Activated CD4-positive, alpha-beta T cell treated with anti-CD3 and anti-CD28 coated beads for 36 hours (primary cell): ENCODE measurements at regions of chr20 and their contacts with region 1.

Region 1: DNA sequence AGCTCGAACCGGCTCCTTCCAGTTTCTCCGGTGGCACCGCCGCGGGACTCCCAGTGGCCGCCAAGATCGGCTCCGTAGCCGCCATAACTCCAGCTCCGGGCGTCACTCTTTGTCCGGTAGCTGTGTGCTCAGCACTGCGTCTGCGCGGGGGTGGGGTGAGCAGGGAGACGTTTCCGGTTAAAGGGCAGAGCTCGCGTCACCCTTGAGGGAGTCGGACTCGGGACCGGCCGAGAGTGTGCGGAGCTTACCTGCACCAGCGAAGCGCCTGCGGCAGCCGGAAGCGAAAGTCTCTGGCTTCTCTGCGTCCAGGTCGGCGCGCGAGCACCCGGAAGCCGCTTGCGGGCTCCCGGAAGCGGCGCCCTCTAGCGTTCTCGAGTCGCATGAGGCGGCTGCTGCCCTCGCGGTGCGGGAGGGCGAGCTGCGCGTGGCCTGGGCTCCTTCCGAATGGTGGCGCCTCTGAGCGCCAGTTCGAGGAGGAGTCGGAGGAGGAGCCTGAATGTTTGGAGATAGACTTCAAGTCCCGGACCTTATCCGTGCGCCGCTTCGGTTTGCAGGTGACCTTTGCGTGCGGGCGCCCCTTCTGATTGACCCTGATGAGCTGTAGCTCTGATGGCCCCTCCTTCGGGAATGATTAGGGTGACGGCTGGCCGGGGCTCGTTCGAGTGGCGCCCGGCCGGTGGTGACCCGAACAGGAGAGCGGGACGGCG is at the start of gene SCAND1:
- DNase-seq: peak; percentile 99
- ATAC-seq: peak; percentile 91
- H3K4me3 Mint-ChIP-seq: peak within 1 kb of the TSS; percentile 97
- H3K27ac Mint-ChIP-seq: peak within 1 kb of the TSS; percentile 100
- H3K4me1 Mint-ChIP-seq: peaks cover 11% of the 10 kb centered on the region
- H3K27me3 Mint-ChIP-seq: no peaks in the 10 kb centered on the region
- total RNA-seq, gene SCAND1: 37.8 to 39.3 TPM

Region 2: GRCh38 chr20:34825530-34826362 is 1128.6 kb before region 1 on chr20 and contains the start of gene NCOA6:
- CTCF ChIA-PET with region 1: no interaction called
- POLR2A ChIA-PET with region 1: no interaction called
- intact Hi-C with region 1: loop called in 1 of 2 experiments (anchors 2 kb)
- DNase-seq: peak; percentile 95
- ATAC-seq: peak; percentile 67
- H3K4me3 Mint-ChIP-seq: peak within 1 kb of the TSS; percentile 86
- H3K27ac Mint-ChIP-seq: peak within 1 kb of the TSS; percentile 95
- H3K4me1 Mint-ChIP-seq: peaks cover 30% of the 10 kb centered on the region
- H3K27me3 Mint-ChIP-seq: no peaks in the 10 kb centered on the region
- total RNA-seq, gene NCOA6: 20.3 to 31.1 TPM

Region 3: DNA sequence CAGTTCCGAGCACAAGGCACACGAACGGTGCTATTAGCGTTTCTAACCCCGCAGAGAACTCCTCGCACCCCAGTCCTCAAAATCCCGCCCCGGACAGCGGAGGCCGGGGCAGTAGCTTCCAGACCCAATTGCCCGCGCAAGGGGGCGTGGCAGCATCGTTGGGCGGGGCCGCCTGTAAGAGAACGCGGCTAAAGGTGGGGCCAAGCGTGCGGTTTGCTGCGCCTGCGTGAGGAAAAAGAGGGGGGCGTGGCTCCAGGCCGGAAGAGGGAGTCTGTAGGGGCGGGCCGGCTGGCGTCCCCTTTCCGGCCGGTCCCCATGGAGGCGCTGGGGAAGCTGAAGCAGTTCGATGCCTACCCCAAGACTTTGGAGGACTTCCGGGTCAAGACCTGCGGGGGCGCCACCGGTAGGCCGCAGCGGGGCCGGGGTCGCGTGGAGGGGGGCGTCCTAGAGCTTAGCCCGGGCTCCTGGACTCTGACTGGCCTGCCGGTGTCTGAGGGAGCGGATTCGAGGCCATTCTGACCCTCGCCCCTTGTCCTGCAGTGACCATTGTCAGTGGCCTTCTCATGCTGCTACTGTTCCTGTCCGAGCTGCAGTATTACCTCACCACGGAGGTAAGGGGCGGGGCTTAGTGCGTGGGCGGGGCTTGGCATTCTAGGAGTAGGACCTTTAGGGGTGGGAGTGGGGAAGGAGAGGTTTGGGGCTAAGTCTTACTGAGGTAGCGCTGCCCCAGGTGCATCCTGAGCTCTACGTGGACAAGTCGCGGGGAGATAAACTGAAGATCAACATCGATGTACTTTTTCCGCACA is 412.4 kb before region 1 on chr20 and contains the start of gene ERGIC3:
- CTCF ChIA-PET with region 1: interaction called, 5 read pairs
- POLR2A ChIA-PET with region 1: interaction called, 5 read pairs
- intact Hi-C with region 1: loop called (anchors 1 to 5 kb)
- DNase-seq: peak; percentile 99
- ATAC-seq: peak; percentile 99
- H3K4me3 Mint-ChIP-seq: peak within 1 kb of the TSS; percentile 83
- H3K27ac Mint-ChIP-seq: peak within 1 kb of the TSS; percentile 83
- H3K4me1 Mint-ChIP-seq: peaks cover 15% of the 10 kb centered on the region
- H3K27me3 Mint-ChIP-seq: no peaks in the 10 kb centered on the region
- total RNA-seq, gene ERGIC3: 109 to 127 TPM

Region 4: DNA sequence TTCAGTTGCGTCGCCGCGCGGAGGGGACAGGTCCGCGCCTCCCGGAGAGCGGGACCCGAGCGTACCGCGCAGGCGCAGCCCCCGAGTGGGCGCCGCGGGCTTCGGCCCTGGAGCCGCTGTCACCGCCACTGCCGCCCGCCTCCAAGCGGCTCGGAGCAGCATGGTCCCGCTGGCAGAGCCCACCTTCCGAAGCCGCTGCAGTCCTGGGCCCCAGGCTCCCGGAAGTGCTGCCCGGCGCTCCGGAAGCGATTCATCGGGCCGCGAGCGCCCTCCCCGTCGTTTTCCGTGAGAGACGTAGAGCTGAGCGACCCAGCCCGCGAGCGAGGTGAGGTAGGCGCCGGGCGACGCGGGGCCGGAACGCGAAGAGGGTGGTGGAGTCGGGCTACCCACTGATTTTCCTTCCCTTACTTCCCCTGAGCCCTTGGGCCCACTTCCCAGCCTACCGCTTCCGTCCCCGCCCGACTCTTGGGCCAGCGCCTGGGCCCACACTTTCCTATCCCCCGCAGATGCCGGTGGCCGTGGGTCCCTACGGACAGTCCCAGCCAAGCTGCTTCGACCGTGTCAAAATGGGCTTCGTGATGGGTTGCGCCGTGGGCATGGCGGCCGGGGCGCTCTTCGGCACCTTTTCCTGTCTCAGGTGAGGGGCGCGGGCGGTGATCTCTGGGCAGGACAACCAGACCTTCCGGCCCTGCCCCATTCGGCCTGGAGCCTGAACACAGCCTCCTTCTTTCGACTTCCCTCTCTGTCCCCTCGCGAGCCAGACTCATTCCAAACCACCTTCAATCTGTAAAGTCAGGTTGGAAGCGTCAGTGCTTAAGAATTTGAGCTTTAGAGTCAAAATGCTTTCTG is 255.0 kb before region 1 on chr20 and contains the starts of genes NFS1 and ROMO1:
- CTCF ChIA-PET with region 1: interaction called, 3 read pairs
- POLR2A ChIA-PET with region 1: no interaction called
- intact Hi-C with region 1: loop called in 1 of 2 experiments (anchors 1 kb)
- DNase-seq: peak; percentile 94
- ATAC-seq: peak; percentile 92
- H3K4me3 Mint-ChIP-seq: peak within 1 kb of the TSS; percentile 87
- H3K27ac Mint-ChIP-seq: peak within 1 kb of the TSS; percentile 98
- H3K4me1 Mint-ChIP-seq: peaks cover 44% of the 10 kb centered on the region
- H3K27me3 Mint-ChIP-seq: no peaks in the 10 kb centered on the region
- total RNA-seq, gene NFS1: 43.2 to 44.6 TPM
- total RNA-seq, gene ROMO1: 50.4 to 112 TPM

Region 5: GRCh38 chr20:35968931-35969330 is 14.6 kb after region 1 on chr20:
- CTCF ChIA-PET with region 1: interaction called, 14 read pairs
- POLR2A ChIA-PET with region 1: no interaction called
- intact Hi-C with region 1: no loop called
- DNase-seq: no peak
- ATAC-seq: no peak
- H3K4me3 Mint-ChIP-seq: no peak overlapping the region
- H3K27ac Mint-ChIP-seq: no peak overlapping the region
- H3K4me1 Mint-ChIP-seq: peaks cover 3% of the 10 kb centered on the region
- H3K27me3 Mint-ChIP-seq: no peaks in the 10 kb centered on the region

Region 6: DNA sequence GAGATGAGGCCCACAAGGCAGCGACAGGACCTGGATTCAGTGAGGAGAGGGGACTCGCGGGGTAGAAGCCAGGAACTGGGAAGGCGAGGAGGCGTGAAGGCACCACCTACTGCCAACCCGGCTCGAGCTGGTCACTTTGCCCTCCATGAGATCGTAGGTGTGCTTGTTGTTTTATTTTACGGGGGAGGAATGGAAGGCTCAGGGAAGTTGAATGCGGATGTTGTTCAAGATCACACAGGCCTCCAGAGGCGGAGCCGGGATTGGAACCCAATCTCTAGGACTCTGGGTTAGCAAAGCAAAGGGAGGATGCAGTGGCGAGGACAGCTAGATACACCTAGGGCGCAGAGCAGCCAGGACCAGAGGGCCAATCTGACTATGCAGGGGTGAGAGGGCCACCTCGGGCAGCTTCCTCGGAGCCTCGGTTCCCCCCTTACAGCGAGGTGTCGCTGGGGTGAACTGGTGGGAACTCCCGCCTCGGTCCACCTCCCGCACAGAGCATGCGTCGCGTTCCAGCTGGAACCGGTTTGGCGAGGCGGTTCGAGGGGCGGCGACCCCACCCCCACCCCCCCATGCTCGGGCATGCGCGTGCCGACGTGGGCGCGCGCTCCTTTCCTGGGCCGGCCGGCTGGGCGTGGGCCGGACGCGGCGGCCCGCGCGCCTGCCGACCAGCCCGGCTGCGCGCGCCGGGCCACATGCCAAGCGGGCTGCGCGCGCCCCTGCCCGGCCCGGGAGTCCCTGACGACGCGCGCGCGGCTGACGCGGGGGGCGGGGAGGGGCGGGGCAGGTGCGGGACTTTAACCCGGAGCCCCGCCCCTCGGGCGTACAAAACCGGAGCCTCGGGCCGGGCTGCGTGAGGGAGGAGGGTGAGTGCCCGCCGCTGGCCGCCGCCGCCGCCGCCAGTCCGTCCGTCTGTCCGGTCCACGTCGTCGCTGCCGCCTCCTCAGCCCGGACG is 506.6 kb after region 1 on chr20:
- CTCF ChIA-PET with region 1: interaction called, 3 read pairs
- POLR2A ChIA-PET with region 1: no interaction called
- intact Hi-C with region 1: loop called in 1 of 2 experiments (anchors 1 kb)
- DNase-seq: peak; percentile 95
- ATAC-seq: peak; percentile 78
- H3K4me3 Mint-ChIP-seq: peak overlapping the region; percentile 67
- H3K27ac Mint-ChIP-seq: peak overlapping the region; percentile 83
- H3K4me1 Mint-ChIP-seq: peaks cover 47% of the 10 kb centered on the region
- H3K27me3 Mint-ChIP-seq: no peaks in the 10 kb centered on the region

Region 7: DNA sequence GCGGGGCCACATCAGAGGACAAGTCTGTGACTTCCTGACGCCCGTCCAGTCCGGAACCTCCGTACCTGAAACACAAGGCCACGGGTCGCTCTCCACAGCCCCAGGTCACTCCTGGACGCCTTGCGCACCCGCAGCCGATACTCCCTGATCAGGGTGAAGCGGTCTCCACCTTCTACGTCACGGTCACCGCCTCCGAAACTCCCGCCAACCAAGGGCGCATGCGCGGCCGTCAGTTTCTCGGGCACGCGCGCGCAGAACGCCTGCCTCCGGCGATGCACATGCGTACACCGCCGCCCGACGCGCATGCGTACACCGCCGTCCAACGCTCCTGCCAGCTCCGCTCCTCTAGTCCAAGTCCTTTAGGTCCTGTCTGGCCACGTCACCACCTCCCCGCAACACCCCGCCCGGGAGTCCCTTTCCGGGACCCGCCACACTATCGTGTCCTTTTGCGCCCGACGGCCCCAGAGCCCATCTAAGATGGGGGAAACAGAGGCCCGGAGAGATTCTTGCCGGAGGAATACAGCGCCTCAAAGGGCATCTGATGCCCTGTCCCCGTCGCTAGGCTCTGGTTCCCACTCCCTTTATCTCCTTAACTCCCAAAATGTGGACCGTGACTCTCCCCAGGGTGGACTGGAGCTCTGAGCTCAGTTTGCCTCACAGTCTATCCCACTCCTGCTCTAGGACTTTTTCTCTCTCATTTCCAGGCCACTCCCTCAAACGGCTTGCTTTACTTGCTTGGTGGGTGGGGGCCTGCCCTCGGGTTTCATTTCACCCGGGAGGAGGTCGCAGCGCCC is 819.4 kb after region 1 on chr20 and contains the start of gene DSN1:
- CTCF ChIA-PET with region 1: no interaction called
- POLR2A ChIA-PET with region 1: no interaction called
- intact Hi-C with region 1: loop called in 1 of 2 experiments (anchors 10 kb)
- DNase-seq: peak; percentile 99
- ATAC-seq: peak; percentile 91
- H3K4me3 Mint-ChIP-seq: peak within 1 kb of the TSS; percentile 79
- H3K27ac Mint-ChIP-seq: peak within 1 kb of the TSS; percentile 97
- H3K4me1 Mint-ChIP-seq: peaks cover 13% of the 10 kb centered on the region
- H3K27me3 Mint-ChIP-seq: no peaks in the 10 kb centered on the region
- total RNA-seq, gene DSN1: 20.4 to 20.7 TPM